ENCODE measurements at regions of chr6 and their contacts with region 1.

Region 1: GRCh38 chr6:132333639-132334520 is 67.4 kb downstream of the MOXD1 start:
- DNase-seq: peak; percentile 21
- H3K4me3 ChIP-seq: no peak overlapping the region
- H3K27ac ChIP-seq: no peak overlapping the region
- H3K4me1 ChIP-seq: no peaks in the 10 kb centered on the region
- H3K27me3 ChIP-seq: peaks cover 77% of the 10 kb centered on the region
- CTCF ChIP-seq: no peak

Region 2: GRCh38 chr6:131733376-131734016 is 600.4 kb before region 1 on chr6:
- CTCF ChIA-PET with region 1: no interaction called
- POLR2A ChIA-PET with region 1: no interaction called
- intact Hi-C with region 1: no loop called
- DNase-seq: peak; percentile 52
- H3K4me3 ChIP-seq: no peak overlapping the region
- H3K27ac ChIP-seq: no peak overlapping the region
- H3K4me1 ChIP-seq: no peaks in the 10 kb centered on the region
- H3K27me3 ChIP-seq: no peaks in the 10 kb centered on the region
- CTCF ChIP-seq: no peak

Region 3: GRCh38 chr6:132316970-132317369 is 16.9 kb before region 1 on chr6:
- CTCF ChIA-PET with region 1: no interaction called
- POLR2A ChIA-PET with region 1: no interaction called
- intact Hi-C with region 1: loop called (anchors 2 kb)
- DNase-seq: no peak
- H3K4me3 ChIP-seq: no peak overlapping the region
- H3K27ac ChIP-seq: no peak overlapping the region
- H3K4me1 ChIP-seq: no peaks in the 10 kb centered on the region
- H3K27me3 ChIP-seq: peaks cover 45% of the 10 kb centered on the region
- CTCF ChIP-seq: no peak